ENCODE measurements at regions of chr10 and their contacts with region 1.

Region 1: GRCh38 chr10:13074561-13075451 is 25.2 kb upstream of the OPTN start:
- DNase-seq: peak; percentile 30
- ATAC-seq: peak; percentile 97
- H3K4me3 ChIP-seq: no peak overlapping the region
- H3K27ac ChIP-seq: no peak overlapping the region
- H3K4me1 ChIP-seq: peaks cover 3% of the 10 kb centered on the region; the same call in 1 of the 2 replicates
- H3K27me3 ChIP-seq: peaks cover 0 to 10% of the 10 kb centered on the region in 2 experiments; a peak in 2 of 5 replicates
- CTCF ChIP-seq: peak; percentile 86
- EP300 ChIP-seq: no peak
- POLR2A ChIP-seq: no peak
- RAD21 ChIP-seq: peak; percentile 70

Region 2: GRCh38 chr10:12710594-12711349 is 364.0 kb before region 1 on chr10:
- CTCF ChIA-PET with region 1: interaction called, 8 read pairs
- POLR2A ChIA-PET with region 1: no interaction called
- in situ Hi-C with region 1: loop called (anchors 10 kb)
- intact Hi-C with region 1: loop called (anchors 2 kb)
- DNase-seq: peak; percentile 41
- ATAC-seq: peak; percentile 82
- H3K4me3 ChIP-seq: no peak overlapping the region
- H3K27ac ChIP-seq: no peak overlapping the region
- H3K4me1 ChIP-seq: no peaks in the 10 kb centered on the region
- H3K27me3 ChIP-seq: no peaks in the 10 kb centered on the region
- CTCF ChIP-seq: peak; percentile 87
- EP300 ChIP-seq: no peak
- POLR2A ChIP-seq: no peak
- RAD21 ChIP-seq: peak; percentile 58

Region 3: GRCh38 chr10:12720217-12720981 is 354.4 kb before region 1 on chr10:
- CTCF ChIA-PET with region 1: interaction called, 3 read pairs
- POLR2A ChIA-PET with region 1: no interaction called
- in situ Hi-C with region 1: loop called (anchors 10 kb)
- intact Hi-C with region 1: loop called (anchors 1 kb)
- DNase-seq: peak; percentile 76
- ATAC-seq: peak; percentile 47; the same call in 2 of the 3 replicates
- H3K4me3 ChIP-seq: no peak overlapping the region
- H3K27ac ChIP-seq: no peak overlapping the region
- H3K4me1 ChIP-seq: peaks cover 11% of the 10 kb centered on the region
- H3K27me3 ChIP-seq: no peaks in the 10 kb centered on the region; a peak in 2 of 5 replicates
- CTCF ChIP-seq: no peak
- EP300 ChIP-seq: peak in 1 of 2 experiments; percentile 44; a peak in 1 of 4 replicates
- POLR2A ChIP-seq: no peak
- RAD21 ChIP-seq: no peak

Region 4: GRCh38 chr10:12902135-12902572 is 172.7 kb before region 1 on chr10:
- CTCF ChIA-PET with region 1: no interaction called
- POLR2A ChIA-PET with region 1: no interaction called
- in situ Hi-C with region 1: no loop called
- intact Hi-C with region 1: loop called (anchors 1 kb)
- DNase-seq: peak; percentile 50
- ATAC-seq: peak; percentile 57; the same call in 2 of the 3 replicates
- H3K4me3 ChIP-seq: no peak overlapping the region
- H3K27ac ChIP-seq: no peak overlapping the region
- H3K4me1 ChIP-seq: no peaks in the 10 kb centered on the region
- H3K27me3 ChIP-seq: peaks cover 0 to 2% of the 10 kb centered on the region in 2 experiments; a peak in 2 of 5 replicates
- CTCF ChIP-seq: peak; percentile 63
- EP300 ChIP-seq: no peak
- POLR2A ChIP-seq: no peak
- RAD21 ChIP-seq: peak; percentile 21; the same call in 1 of the 2 replicates

Region 5: GRCh38 chr10:12975266-12975665 is 99.5 kb before region 1 on chr10:
- CTCF ChIA-PET with region 1: no interaction called
- POLR2A ChIA-PET with region 1: no interaction called
- in situ Hi-C with region 1: no loop called
- intact Hi-C with region 1: no loop called
- DNase-seq: no peak
- ATAC-seq: peak; percentile 59
- H3K4me3 ChIP-seq: no peak overlapping the region
- H3K27ac ChIP-seq: no peak overlapping the region
- H3K4me1 ChIP-seq: no peaks in the 10 kb centered on the region
- H3K27me3 ChIP-seq: 0 out of 5 replicates have a peak, but pooled peaks cover 0 to 5% of the 10 kb centered on the region in 2 experiments
- CTCF ChIP-seq: peak; percentile 18; the same call in 1 of the 2 replicates
- EP300 ChIP-seq: no peak
- POLR2A ChIP-seq: no peak
- RAD21 ChIP-seq: no peak

Measured in HepG2 (cell line).